GM12878 (cell line): ENCODE measurements at regions of chr2 and their contacts with region 1.

Region 1: GRCh38 chr2:190159453-190159852 is 96.9 kb upstream of the MSTN start:
- DNase-seq: no peak
- ATAC-seq: no peak
- H3K4me3 ChIP-seq: no peak overlapping the region
- H3K27ac ChIP-seq: no peak overlapping the region
- H3K4me1 ChIP-seq: peaks cover 10% of the 10 kb centered on the region
- H3K27me3 ChIP-seq: no peaks in the 10 kb centered on the region
- CTCF ChIP-seq: no peak
- EP300 ChIP-seq: no peak
- POLR2A ChIP-seq: no peak
- RAD21 ChIP-seq: no peak

Region 2: GRCh38 chr2:189982777-189983394 is 176.6 kb before region 1 on chr2:
- CTCF ChIA-PET with region 1: no interaction called
- POLR2A ChIA-PET with region 1: no interaction called
- RAD21 ChIA-PET with region 1: no interaction called
- SMC1A ChIA-PET with region 1: no interaction called
- in situ Hi-C with region 1: no loop called
- intact Hi-C with region 1: no loop called
- DNase-seq: no peak
- ATAC-seq: no peak
- H3K4me3 ChIP-seq: no peak overlapping the region
- H3K27ac ChIP-seq: no peak overlapping the region
- H3K4me1 ChIP-seq: no peaks in the 10 kb centered on the region
- H3K27me3 ChIP-seq: no peaks in the 10 kb centered on the region
- CTCF ChIP-seq: peak in 2 of 3 experiments; percentile 22 to 33; a peak in 3 of 6 replicates
- EP300 ChIP-seq: no peak
- POLR2A ChIP-seq: no peak
- RAD21 ChIP-seq: peak; percentile 34

Region 3: GRCh38 chr2:190173392-190173791 is 13.9 kb after region 1 on chr2:
- CTCF ChIA-PET with region 1: interaction called, 11 read pairs
- POLR2A ChIA-PET with region 1: interaction called, 3 read pairs
- RAD21 ChIA-PET with region 1: interaction called, 4 read pairs
- SMC1A ChIA-PET with region 1: interaction called, 25 read pairs
- in situ Hi-C with region 1: no loop called
- intact Hi-C with region 1: no loop called
- DNase-seq: no peak
- ATAC-seq: no peak
- H3K4me3 ChIP-seq: no peak overlapping the region
- H3K27ac ChIP-seq: no peak overlapping the region
- H3K4me1 ChIP-seq: no peaks in the 10 kb centered on the region
- H3K27me3 ChIP-seq: no peaks in the 10 kb centered on the region
- CTCF ChIP-seq: no peak
- EP300 ChIP-seq: no peak
- POLR2A ChIP-seq: no peak
- RAD21 ChIP-seq: no peak

Region 4: DNA sequence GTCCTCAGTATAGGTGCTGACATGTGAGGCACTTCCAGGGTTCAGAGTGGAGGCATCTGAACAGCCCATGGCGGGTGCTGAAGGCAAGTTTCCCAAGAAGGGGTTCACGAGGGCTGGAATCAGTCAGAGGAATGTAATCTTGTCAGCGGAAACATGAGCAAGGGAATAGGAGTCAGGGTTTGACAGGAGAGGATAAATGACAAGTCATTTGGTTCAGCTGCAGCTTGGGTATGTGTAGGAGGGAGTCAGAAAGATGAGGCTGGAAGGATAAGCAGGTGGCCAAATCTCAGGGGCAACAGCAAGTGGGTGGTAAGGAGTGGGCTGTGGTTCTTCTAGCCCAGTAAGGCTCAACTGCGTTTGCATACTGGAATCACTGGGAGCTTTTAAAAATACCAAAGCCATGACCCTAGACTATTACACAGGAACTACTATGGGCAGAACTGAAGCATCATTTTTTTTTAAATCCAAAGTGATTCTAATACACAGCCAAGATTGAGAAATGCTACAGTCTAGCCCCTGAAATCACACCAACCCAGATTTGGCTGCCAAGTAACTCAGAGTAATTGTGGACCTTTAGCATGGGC is 447.7 kb after region 1 on chr2:
- CTCF ChIA-PET with region 1: no interaction called
- POLR2A ChIA-PET with region 1: no interaction called
- RAD21 ChIA-PET with region 1: no interaction called
- SMC1A ChIA-PET with region 1: no interaction called
- in situ Hi-C with region 1: no loop called
- intact Hi-C with region 1: no loop called
- DNase-seq: no peak
- ATAC-seq: peak; percentile 19; the same call in 1 of the 3 replicates
- H3K4me3 ChIP-seq: no peak overlapping the region
- H3K27ac ChIP-seq: no peak overlapping the region
- H3K4me1 ChIP-seq: peaks cover 15% of the 10 kb centered on the region
- H3K27me3 ChIP-seq: no peaks in the 10 kb centered on the region
- CTCF ChIP-seq: no peak
- EP300 ChIP-seq: no peak
- POLR2A ChIP-seq: no peak
- RAD21 ChIP-seq: no peak